ENCODE measurements at regions of chr15 and their contacts with region 1.

Region 1: GRCh38 chr15:90320061-90320884 is 31.8 kb upstream of the ZNF774 start:
- DNase-seq: peak; percentile 92
- H3K27ac ChIP-seq: peak overlapping the region; percentile 71
- CTCF ChIP-seq: peak; percentile 99

Region 2: GRCh38 chr15:90291679-90292356 is 28.5 kb before region 1 on chr15:
- CTCF ChIA-PET with region 1: interaction called, 16 read pairs
- POLR2A ChIA-PET with region 1: no interaction called
- DNase-seq: peak; percentile 56
- H3K27ac ChIP-seq: no peak overlapping the region
- CTCF ChIP-seq: no peak

Region 3: DNA sequence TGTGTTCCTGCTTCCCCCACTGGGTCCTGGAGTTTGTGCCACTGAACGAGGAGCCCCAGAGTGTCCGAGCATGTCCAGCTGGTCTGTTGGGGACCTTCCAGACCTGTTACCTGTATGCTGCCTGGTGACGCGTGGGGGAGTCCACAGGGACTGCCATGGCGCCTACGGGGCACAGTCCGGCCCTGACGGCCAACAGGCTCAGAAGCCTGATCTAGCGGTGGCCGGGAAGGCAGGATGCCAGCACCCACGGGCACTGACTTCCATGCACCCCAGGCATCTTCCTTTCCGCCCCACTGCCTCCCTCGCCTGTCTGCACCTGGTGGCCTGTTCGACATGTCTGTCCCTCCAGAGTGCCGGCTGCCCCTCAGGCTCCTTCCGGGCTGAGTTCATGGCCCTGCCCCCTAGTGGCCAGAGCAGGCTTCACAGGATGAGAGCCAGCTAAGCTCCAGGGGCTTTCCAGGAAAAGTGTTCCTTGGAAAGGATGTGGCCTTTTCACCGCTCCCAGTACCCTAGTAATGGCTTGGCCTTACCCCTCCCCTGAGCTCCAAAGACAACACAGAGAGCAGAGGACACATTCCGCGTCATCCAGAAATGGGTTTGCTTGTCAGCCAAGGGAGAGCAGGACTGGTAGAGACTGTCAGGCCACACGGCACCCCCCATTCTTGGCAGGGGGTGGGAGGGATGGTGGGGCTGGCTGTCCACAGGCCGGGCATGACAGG is 19.1 kb before region 1 on chr15:
- CTCF ChIA-PET with region 1: interaction called, 10 read pairs
- POLR2A ChIA-PET with region 1: no interaction called
- DNase-seq: peak; percentile 17
- H3K27ac ChIP-seq: 0 out of 2 replicates have a peak overlapping the region, but pooled peaks have one; percentile 0
- CTCF ChIP-seq: peak; percentile 86

Region 4: GRCh38 chr15:90340343-90340742 is 20.1 kb after region 1 on chr15:
- CTCF ChIA-PET with region 1: interaction called, 10 read pairs
- POLR2A ChIA-PET with region 1: no interaction called
- DNase-seq: no peak
- H3K27ac ChIP-seq: no peak overlapping the region
- CTCF ChIP-seq: no peak

Region 5: GRCh38 chr15:90425726-90426346 is 105.6 kb after region 1 on chr15:
- CTCF ChIA-PET with region 1: interaction called, 11 read pairs
- POLR2A ChIA-PET with region 1: no interaction called
- DNase-seq: no peak
- H3K27ac ChIP-seq: peak overlapping the region; percentile 49
- CTCF ChIP-seq: no peak

Region 6: DNA sequence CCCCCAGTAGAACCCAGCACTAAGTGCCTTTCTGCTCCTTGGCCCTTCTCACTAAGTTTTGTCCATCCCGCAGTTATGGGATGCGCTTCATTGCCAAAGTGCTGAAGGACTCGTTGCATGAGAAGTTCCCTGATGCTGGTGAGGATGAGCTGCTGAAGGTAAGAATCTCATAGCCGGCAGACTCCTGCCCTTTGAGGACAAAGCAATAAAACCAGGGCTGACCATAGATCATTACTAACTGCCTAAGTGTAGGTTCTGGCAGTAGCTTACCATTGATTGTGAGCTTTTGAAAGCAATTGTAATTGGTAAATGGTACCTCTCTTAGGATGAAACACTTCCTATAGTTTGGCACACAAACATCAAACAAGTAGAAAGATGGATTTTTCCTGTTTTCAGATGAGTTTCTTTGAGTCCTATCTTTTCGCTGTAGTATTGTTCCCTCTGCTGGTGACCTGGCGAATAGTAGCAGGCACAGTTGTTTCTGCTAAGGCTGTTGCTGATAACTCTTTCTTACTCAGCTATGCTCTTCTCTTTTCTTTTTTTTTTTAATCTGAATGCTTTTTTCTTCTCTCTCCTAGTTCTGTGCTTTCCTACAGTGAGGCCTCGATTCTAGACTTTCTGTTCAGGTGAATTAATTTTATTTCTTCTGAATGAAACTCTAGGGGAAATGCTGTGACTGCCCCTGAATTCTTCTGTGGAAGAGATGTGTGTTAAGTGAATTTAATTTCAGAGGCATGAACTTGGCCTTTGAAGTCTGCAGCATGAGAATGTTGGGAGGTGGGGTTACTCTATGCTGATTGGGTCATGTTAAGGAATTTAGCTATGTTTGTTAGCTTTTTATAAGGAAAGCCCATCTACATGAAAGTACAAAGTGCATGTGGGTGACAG is 162.1 kb after region 1 on chr15:
- CTCF ChIA-PET with region 1: interaction called, 12 read pairs
- POLR2A ChIA-PET with region 1: no interaction called
- DNase-seq: peak; percentile 45
- H3K27ac ChIP-seq: peak overlapping the region; percentile 20; the same call in 1 of the 2 replicates
- CTCF ChIP-seq: peak; percentile 89